WTC11 (cell line): ENCODE measurements at regions of chr16 and their contacts with region 1.

Region 1: DNA sequence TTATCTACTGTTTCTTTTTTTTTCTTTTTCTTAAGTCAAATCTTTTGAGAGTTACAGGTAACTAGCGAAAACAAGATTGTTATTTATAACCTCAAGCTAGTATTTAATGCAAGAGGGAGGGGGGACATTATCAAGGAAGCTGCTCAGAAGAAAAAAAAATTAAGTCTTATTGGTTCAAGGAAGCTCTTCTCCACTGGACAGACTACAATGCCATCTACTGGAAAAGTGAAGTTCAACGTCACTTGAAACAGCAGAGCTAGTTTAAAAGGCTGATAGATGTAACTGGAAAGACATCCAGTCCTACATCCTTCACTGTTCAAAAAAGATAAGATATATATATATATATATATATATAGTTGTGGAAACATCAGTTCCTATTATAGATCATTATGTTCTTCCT is 418.0 kb upstream of the PSMD7 start:
- DNase-seq: no peak
- ATAC-seq: peak; percentile 30; the same call in 1 of the 2 replicates
- H3K4me3 Mint-ChIP-seq: no peak overlapping the region
- H3K27ac Mint-ChIP-seq: no peak overlapping the region
- H3K4me1 Mint-ChIP-seq: peaks cover 22% of the 10 kb centered on the region
- H3K27me3 Mint-ChIP-seq: no peaks in the 10 kb centered on the region
- CTCF ChIP-seq: no peak

Region 2: DNA sequence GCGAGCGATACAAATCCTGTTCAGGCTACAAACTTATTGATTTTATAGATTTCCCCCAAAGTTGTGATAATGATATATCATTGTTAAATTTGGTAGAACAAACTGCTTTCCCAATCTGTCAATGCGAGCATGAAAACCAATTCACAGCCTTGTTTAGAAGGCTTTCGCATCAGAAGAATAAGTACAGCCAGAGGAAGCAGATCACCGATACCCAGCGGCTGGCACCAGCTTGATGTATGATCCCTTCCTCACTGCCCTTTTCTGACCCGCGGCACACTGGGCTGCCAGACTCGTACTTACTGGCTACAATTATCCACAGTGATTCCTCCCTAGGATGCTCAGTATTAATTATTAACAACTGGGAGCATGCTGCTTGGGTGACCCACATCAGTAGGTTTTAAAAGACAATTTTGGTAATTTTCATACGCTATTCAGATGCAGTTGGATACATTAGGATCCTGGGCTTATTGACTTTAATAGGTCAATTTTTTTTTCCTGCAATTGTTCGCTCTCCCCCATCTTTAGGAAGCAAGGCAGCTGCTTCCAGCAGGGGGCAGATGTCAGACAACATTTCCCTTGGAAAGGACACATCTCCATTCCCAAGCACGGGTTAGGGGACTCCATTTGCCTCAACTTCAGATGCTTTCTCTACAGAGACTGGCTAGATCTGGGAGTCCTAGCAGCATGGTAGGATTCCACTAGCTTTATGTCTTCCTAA is 164.7 kb before region 1 on chr16:
- CTCF ChIA-PET with region 1: interaction called, 10 read pairs
- POLR2A ChIA-PET with region 1: no interaction called
- DNase-seq: peak; percentile 69
- ATAC-seq: peak; percentile 58
- H3K4me3 Mint-ChIP-seq: no peak overlapping the region
- H3K27ac Mint-ChIP-seq: peak overlapping the region; percentile 61
- H3K4me1 Mint-ChIP-seq: peaks cover 71% of the 10 kb centered on the region
- H3K27me3 Mint-ChIP-seq: no peaks in the 10 kb centered on the region
- CTCF ChIP-seq: peak; percentile 56

Region 3: GRCh38 chr16:73846356-73846755 is 32.3 kb before region 1 on chr16:
- CTCF ChIA-PET with region 1: interaction called, 13 read pairs
- POLR2A ChIA-PET with region 1: no interaction called
- DNase-seq: peak; percentile 52
- ATAC-seq: peak; percentile 69; the same call in 1 of the 2 replicates
- H3K4me3 Mint-ChIP-seq: no peak overlapping the region
- H3K27ac Mint-ChIP-seq: no peak overlapping the region
- H3K4me1 Mint-ChIP-seq: peaks cover 14% of the 10 kb centered on the region
- H3K27me3 Mint-ChIP-seq: no peaks in the 10 kb centered on the region
- CTCF ChIP-seq: no peak

Region 4: DNA sequence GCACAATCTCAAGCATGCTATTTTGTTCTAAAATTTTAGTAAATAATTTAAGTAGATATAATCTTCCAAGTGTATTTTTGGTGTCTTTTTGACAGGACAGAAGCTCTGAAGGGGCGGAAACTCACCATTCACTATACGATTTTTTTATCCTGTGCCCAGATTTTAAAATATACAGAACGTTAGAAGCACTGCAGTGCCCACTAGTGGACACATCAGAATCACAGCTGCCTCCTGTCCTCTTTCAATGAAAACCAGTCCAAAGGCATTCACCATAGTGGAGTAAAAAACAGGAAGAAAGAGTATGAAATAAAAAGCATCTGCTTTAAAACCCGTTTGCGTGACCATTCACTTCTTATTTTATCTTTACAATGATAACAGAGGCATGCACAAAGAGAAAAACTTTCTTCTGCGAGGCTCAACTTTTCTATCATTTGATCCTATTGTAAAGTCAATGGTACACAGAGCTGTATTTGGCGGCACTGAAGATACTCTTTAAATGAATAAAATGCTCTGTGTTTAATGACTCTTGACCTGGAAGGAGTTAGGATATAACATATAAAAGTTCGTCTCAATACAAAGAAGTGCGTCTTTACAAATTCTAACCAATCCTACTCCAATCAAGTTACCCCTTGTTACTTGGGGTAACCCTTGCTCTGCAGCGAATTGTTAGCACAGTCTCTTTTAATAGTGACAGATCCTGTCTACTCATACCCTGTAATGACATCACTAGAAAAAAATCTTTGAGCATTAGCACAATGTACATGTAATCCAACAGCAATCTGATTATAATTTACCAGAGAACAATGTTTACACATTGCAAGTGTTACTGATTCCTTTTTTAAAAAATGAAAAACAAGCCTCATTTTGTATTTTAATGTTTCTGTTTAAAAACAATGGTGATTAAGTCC is 78.2 kb after region 1 on chr16:
- CTCF ChIA-PET with region 1: interaction called, 10 read pairs
- POLR2A ChIA-PET with region 1: no interaction called
- DNase-seq: peak; percentile 73
- ATAC-seq: peak; percentile 67
- H3K4me3 Mint-ChIP-seq: no peak overlapping the region
- H3K27ac Mint-ChIP-seq: no peak overlapping the region
- H3K4me1 Mint-ChIP-seq: no peaks in the 10 kb centered on the region; the same call in 1 of the 2 replicates
- H3K27me3 Mint-ChIP-seq: no peaks in the 10 kb centered on the region; the same call in 1 of the 2 replicates
- CTCF ChIP-seq: peak; percentile 42; the same call in 1 of the 2 replicates